Activated CD4-positive, alpha-beta memory T cell treated with anti-CD3 and anti-CD28 coated beads for 36 hours (primary cell): ENCODE measurements at regions of chrX and their contacts with region 1.

Region 1: DNA sequence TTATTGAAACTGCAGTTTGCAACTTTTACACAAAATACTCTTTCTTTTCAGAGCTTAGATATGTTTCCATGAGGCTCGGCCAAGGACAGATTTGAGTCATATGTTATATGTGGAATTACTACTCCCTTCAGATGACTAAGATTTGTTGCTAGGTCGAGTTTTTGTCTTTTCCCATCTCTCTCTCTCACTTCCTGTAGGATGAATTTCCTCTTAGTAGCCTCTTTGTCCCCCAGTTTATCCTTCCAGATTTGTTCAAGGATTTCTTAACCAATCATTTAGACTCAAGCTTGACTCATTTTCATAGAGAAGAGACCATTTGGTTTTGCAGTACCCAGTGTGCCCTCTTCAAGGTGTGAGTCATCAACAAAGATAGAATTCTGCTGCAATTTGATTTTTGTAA is 209.2 kb downstream of the GLUD2 start:
- DNase-seq: no peak
- H3K4me3 Mint-ChIP-seq: no peak overlapping the region
- H3K27ac Mint-ChIP-seq: no peak overlapping the region
- H3K4me1 Mint-ChIP-seq: peaks cover 14% of the 10 kb centered on the region
- H3K27me3 Mint-ChIP-seq: no peaks in the 10 kb centered on the region

Region 2: GRCh38 chrX:121160987-121161386 is 95.7 kb before region 1 on chrX:
- CTCF ChIA-PET with region 1: no interaction called
- POLR2A ChIA-PET with region 1: no interaction called
- intact Hi-C with region 1: loop called (anchors 5 kb)
- DNase-seq: no peak
- H3K4me3 Mint-ChIP-seq: peak overlapping the region; percentile 21
- H3K27ac Mint-ChIP-seq: peak overlapping the region; percentile 74
- H3K4me1 Mint-ChIP-seq: peaks cover 32% of the 10 kb centered on the region
- H3K27me3 Mint-ChIP-seq: no peaks in the 10 kb centered on the region

Region 3: GRCh38 chrX:121301356-121301755 is 44.7 kb after region 1 on chrX:
- CTCF ChIA-PET with region 1: interaction called, 3 read pairs
- POLR2A ChIA-PET with region 1: no interaction called
- intact Hi-C with region 1: loop called (anchors 1 kb)
- DNase-seq: no peak
- H3K4me3 Mint-ChIP-seq: no peak overlapping the region
- H3K27ac Mint-ChIP-seq: no peak overlapping the region
- H3K4me1 Mint-ChIP-seq: peaks cover 10% of the 10 kb centered on the region
- H3K27me3 Mint-ChIP-seq: no peaks in the 10 kb centered on the region

Region 4: GRCh38 chrX:121374471-121374870 is 117.8 kb after region 1 on chrX:
- CTCF ChIA-PET with region 1: no interaction called
- POLR2A ChIA-PET with region 1: no interaction called
- intact Hi-C with region 1: no loop called
- DNase-seq: no peak
- H3K4me3 Mint-ChIP-seq: no peak overlapping the region
- H3K27ac Mint-ChIP-seq: no peak overlapping the region
- H3K4me1 Mint-ChIP-seq: no peaks in the 10 kb centered on the region
- H3K27me3 Mint-ChIP-seq: no peaks in the 10 kb centered on the region